PC-9 (cell line): ENCODE measurements at regions of chr16 and their contacts with region 1.

Region 1: GRCh38 chr16:57394444-57394843 is 10.1 kb upstream of the CCL17 start:
- DNase-seq: peak; percentile 60 to 64
- H3K4me3 ChIP-seq: no peak overlapping the region
- H3K27ac ChIP-seq: no peak overlapping the region
- H3K4me1 ChIP-seq: peaks cover 33% of the 10 kb centered on the region
- H3K27me3 ChIP-seq: no peaks in the 10 kb centered on the region
- CTCF ChIP-seq: no peak

Region 2: DNA sequence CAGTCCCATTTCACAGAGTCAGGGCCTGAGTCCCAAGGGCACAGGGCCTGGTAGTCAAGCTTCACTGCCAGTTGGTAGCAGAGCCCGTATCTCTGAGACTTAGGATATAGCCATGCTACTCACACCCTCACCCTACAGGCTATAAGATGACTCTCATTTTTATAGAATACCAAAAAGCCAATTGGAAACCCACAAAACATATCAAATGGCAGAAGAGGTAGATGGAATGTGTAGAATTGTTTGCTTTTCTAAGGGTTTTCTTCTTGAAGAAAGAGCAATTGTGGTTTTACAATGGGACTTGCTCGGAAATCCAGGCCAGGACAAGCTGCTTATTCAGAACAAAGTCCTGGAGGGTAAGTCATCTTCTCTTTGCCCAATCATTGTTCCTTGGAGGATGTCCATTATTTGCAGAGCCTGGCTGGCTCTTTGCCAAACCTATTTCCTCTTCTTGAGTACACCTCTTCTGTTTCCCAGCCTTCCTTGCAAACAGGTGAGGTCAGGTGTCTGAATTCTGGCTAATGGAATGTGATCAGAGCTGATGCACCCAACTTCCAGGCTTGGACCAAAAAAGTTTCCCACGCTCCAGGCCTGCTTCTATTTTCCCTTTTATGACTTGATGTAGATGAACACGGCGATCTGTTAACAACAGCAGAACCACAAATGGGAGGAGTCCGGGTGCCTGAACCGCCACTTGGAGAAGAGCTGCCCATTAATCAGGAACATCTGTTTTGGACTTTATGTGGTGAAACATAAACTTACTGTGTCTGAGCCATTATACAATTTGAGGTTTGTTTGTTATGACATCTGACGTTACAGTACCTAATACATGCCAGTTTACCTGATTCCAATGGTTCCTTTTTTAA is 52.8 kb before region 1 on chr16:
- CTCF ChIA-PET with region 1: no interaction called
- POLR2A ChIA-PET with region 1: interaction called, 6 read pairs
- intact Hi-C with region 1: loop called (anchors 1 kb)
- DNase-seq: peak; percentile 89 to 100
- H3K4me3 ChIP-seq: peak overlapping the region; percentile 0; the same call in 1 of the 2 replicates
- H3K27ac ChIP-seq: peak overlapping the region; percentile 91
- H3K4me1 ChIP-seq: peaks cover 38% of the 10 kb centered on the region
- H3K27me3 ChIP-seq: no peaks in the 10 kb centered on the region
- CTCF ChIP-seq: no peak

Region 3: GRCh38 chr16:57361404-57361803 is 33.0 kb before region 1 on chr16:
- CTCF ChIA-PET with region 1: no interaction called
- POLR2A ChIA-PET with region 1: no interaction called
- intact Hi-C with region 1: loop called (anchors 2 kb)
- DNase-seq: peak; percentile 36 to 62
- H3K4me3 ChIP-seq: no peak overlapping the region
- H3K27ac ChIP-seq: peak overlapping the region; percentile 42
- H3K4me1 ChIP-seq: peaks cover 17% of the 10 kb centered on the region
- H3K27me3 ChIP-seq: no peaks in the 10 kb centered on the region
- CTCF ChIP-seq: no peak

Region 4: GRCh38 chr16:57409870-57410585 is 15.6 kb after region 1 on chr16:
- CTCF ChIA-PET with region 1: no interaction called
- POLR2A ChIA-PET with region 1: no interaction called
- intact Hi-C with region 1: loop called (anchors 1 kb)
- DNase-seq: peak; percentile 70 to 75
- H3K4me3 ChIP-seq: no peak overlapping the region
- H3K27ac ChIP-seq: no peak overlapping the region
- H3K4me1 ChIP-seq: peaks cover 15% of the 10 kb centered on the region
- H3K27me3 ChIP-seq: no peaks in the 10 kb centered on the region; the same call in 1 of the 2 replicates
- CTCF ChIP-seq: no peak; the same call in 1 of the 2 replicates